ENCODE measurements at regions of chr9 and their contacts with region 1.

Region 1: DNA sequence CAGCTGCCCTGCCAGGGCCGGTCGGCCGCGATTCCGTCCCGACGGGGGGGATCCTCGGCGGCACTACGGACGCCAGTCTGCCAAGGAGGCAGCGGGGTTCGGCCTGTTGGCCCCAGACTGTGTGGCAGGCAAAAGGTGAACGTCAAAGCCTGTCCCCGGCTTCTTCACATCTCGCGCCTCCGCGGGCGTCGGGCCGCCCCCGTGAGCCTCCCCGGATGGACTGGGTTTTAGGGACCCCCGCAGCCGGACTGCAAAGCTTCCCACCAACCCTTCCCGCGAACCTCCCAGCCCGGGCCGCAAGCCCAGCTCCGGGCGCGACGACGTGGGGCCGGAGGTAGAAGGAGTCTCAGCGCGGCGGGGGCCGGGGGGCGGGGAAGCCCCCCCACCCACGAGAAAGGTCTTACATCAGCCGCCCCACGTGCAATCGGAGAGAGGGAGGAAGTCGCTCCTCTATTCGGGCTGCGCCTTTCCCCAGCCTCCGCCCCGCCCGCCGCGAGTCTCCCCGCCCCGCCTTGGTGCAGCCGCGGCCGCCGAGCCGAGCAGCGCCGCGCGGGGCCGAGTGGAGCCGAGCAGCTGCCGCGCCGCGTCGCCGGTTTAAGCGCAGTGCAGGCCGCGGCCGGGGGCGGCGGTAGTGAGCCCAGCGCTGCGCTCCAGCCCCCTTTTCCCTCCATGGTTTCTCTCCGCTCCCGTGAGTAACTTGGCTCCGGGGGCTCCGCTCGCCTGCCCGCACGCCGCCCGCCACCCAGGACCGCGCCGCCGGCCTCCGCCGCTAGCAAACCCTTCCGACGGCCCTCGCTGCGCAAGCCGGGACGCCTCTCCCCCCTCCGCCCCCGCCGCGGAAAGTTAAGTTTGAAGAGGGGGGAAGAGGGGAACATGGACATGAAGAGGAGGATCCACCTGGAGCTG is at the start of gene ANP32B:
- DNase-seq: peak; percentile 88 to 95
- H3K4me3 ChIP-seq: peak within 1 kb of the TSS; percentile 89 to 91
- H3K27ac ChIP-seq: peak within 1 kb of the TSS; percentile 98 to 99
- H3K4me1 ChIP-seq: peaks cover 0 to 36% (median 14%) of the 10 kb centered on the region in 4 donors
- H3K27me3 ChIP-seq: no peaks in the 10 kb centered on the region
- CTCF ChIP-seq: peak; percentile 84 to 92

Region 2: DNA sequence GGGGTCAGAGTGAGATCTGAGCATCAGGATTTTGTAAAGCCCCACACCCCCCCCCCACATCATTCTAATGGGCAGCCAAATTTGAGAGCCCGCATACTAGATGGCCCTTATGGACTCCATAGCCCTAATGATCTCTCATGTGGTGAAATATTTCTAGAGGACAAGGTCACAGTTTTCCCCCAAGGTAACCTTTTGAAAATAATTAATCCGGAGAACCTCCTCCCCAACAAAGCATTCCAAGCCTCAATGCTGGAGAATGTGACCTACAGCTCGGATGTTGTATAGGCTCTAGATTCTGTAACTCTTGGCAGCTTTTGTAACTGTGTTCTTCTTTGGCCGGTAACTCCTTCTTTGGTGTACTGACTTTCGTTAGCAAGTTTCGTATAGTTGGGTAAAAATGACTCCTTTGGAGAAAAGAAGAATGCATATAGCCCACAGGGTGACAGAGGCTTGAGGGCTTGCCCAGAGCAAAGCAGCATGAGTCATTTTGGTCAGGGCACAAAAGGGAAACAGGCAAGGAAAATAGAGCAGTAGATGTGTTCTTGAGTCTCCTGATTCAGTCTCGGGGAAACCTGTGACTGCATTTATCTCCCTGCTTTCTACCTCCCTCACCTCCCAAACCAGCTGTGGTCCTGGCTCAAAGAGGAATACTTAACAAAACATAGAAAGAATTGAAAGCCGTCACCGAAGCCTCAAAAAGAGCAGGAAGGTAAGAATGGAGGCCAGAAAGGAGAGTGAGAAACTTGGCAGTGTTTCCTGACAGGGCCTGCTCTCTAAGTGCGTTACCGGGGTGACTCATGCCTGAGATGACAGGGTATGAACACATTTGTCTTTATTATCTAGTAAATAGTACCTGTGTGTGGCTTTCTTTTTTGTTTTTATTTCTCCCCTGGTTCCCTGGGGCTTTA is 279.2 kb before region 1 on chr9:
- intact Hi-C with region 1: loop called (anchors 10 kb)
- DNase-seq: no peak
- H3K4me3 ChIP-seq: no peak overlapping the region
- H3K27ac ChIP-seq: peak overlapping the region; percentile 43 to 78
- H3K4me1 ChIP-seq: peaks cover 0 to 14% (median 0%) of the 10 kb centered on the region in 4 donors
- H3K27me3 ChIP-seq: no peaks in the 10 kb centered on the region
- CTCF ChIP-seq: no peak

Region 3: DNA sequence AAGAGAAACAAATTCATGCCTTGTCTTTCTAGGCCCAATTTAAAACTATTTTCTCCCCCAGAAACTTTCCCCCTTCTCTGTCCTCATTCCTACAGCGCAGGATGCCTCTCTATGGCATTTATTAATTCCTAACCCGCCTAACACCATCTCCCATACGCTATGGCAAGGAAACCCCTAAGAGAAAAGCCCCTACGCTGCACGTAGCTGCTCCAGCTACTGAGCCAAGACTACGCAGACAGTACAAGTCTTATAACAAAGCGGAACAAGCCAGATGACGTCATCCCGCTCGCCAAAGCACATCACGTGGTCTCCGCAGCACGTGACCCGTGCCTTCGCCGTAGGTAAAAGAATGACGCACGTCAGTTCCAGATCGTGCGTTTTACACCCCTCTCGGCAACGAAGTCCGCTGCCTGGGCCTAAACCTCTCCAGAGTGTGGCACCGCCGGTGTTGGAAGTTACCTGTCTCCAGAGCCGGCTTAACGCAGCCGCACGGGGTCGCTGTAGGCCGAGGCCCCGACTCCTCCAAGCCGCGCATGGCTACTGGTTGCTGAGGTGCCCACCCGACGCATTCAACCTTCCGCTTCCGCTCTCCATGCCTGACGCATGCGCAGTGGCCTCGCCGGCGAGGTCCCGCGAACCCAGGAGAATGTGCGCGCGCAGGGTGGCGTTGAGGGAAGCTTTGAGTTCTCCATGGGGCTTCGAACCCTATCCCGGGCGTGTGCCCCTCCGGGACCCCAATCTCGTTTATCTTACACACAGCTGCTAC is 60.8 kb before region 1 on chr9 and contains the start of gene TRMO:
- intact Hi-C with region 1: loop called (anchors 5 kb)
- DNase-seq: peak; percentile 98
- H3K4me3 ChIP-seq: peak within 1 kb of the TSS; percentile 58 to 72
- H3K27ac ChIP-seq: peak within 1 kb of the TSS; percentile 90 to 98
- H3K4me1 ChIP-seq: peaks cover 0 to 22% (median 10%) of the 10 kb centered on the region in 4 donors
- H3K27me3 ChIP-seq: peaks cover 0 to 3% of the 10 kb centered on the region in 2 donors
- CTCF ChIP-seq: peak; percentile 57 to 61

Region 4: DNA sequence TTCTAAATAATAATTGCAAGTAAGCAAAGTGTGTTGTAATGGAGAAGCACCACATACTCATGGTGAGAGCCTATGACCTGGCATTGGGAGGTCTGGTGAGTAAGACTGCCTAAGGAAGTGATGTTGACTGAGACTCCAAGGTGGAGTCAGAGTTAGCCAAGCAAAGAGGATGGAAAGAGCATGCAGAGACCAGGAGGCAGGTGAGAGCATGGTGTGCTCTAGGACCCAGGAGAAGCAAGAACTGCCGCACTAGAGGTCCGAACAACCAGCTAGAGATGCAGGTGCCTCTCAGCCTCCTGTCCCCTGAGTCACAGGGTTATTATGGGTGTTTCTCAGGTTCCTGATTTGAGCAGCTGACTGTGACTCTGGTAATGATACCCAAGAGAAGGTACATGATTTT is 27.5 kb after region 1 on chr9:
- intact Hi-C with region 1: no loop called
- DNase-seq: no peak
- H3K4me3 ChIP-seq: no peak overlapping the region
- H3K27ac ChIP-seq: peak overlapping the region in 1 of 2 donors; percentile 16
- H3K4me1 ChIP-seq: peaks cover 0 to 18% (median 7%) of the 10 kb centered on the region in 4 donors
- H3K27me3 ChIP-seq: no peaks in the 10 kb centered on the region
- CTCF ChIP-seq: no peak

Region 5: DNA sequence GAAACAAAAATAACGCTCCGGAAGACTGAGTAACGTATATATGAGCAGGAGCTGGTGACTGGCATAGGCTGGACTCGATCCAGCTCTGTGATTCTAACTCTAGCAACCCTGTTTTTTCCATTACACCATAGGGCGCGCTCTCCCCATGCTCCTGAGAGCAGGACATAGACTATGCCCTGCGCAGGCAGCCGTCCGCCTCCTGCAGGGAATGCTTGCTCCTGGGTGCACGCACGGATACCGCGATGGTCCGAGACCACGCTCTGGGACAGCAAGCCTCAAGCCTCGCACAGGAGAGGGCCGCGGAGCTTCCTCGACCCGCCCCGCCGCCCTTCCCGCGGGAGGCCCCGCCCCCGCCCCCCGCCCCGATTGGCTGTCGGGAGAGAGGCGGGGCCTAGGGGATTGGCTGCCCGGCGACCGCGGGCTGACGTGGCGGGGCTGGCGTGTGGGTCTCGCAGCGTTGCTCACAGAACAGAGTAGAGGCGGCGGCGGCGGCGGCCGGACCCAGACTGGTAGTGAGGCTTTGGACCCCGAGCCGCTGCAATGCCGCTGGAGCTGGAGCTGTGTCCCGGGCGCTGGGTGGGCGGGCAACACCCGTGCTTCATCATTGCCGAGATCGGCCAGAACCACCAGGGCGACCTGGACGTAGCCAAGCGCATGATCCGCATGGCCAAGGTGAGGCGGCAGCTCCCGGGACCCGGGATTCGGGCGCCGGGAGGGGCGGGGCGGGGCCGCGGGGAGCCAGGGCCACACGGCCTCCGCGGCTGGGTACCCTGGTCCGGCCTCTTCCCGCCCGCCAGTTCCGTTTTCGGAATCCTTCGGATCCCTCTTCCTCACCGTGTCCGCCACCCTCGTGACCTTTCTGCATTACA is 73.6 kb after region 1 on chr9 and contains the start of gene NANS:
- intact Hi-C with region 1: loop called (anchors 1 kb)
- DNase-seq: peak; percentile 89 to 96
- H3K4me3 ChIP-seq: peak within 1 kb of the TSS; percentile 87 to 96
- H3K27ac ChIP-seq: peak within 1 kb of the TSS; percentile 95 to 97
- H3K4me1 ChIP-seq: peaks cover 0 to 20% (median 13%) of the 10 kb centered on the region in 4 donors
- H3K27me3 ChIP-seq: no peaks in the 10 kb centered on the region
- CTCF ChIP-seq: no peak